Activated CD4-positive, alpha-beta T cell treated with anti-CD3 and anti-CD28 coated beads, Interleukin-2, amount 10 ng/mL, durations not matched to agents 24 days and 14 days (primary cell): ENCODE measurements at regions of chr15 and their contacts with region 1.

Region 1: DNA sequence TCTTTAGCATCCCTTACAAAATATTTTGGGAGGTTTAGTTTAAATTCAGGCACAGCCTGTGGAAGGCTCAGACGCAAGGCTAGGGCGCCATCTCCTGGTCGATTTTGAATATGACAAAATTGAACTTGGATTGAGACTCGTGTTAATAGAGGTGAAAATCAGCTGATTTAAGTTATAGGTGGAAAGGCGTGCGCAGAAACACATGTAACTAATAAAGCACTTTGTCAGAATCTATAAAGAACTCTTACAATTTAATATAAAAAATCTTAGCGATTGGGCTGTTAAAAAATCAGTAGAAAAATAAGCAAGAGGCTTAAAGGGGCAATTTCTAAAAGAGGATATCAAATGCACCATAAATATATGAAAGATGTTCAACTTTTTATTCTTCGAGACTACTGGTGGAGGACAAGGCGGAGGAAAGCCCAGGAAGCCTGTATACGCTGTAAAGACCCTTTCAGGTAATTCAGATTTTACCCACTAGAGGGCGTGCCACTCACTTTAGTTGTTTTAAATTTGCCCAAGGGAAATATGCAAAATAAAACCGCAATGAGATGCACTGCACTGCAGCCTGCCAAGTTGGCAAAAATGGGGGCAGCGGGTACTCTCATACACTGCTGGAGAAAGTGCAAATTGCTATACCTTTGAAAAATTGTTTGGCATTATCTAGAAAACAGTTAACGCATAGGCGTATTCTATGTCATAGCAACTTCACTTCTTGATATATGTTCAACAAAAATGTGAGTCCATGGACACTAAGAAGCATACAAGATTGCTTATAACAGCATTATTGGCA is 64.7 kb downstream of the SLC30A4 start:
- DNase-seq: peak; percentile 95
- H3K4me3 Mint-ChIP-seq: peak overlapping the region; percentile 86
- H3K27ac Mint-ChIP-seq: peak overlapping the region; percentile 92
- H3K4me1 Mint-ChIP-seq: peaks cover 44% of the 10 kb centered on the region
- H3K27me3 Mint-ChIP-seq: no peaks in the 10 kb centered on the region

Region 2: DNA sequence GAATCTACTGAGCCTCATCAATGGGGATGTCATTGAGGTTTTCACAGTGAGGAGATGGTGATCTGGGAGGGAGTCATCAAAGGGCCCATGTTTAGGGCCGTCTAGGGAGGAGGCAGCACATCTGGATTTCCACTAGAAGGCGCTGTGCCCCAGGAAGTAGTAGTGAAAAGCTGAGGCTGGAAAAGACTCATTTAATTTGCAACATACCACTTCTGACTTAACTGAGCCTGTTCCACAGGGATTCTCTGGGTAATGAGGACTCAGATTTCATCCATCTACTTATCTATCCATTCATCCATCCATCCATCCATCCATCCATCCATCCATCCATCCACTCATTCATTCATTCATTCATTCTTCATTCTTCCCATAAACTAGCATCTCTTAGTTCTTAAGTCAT is 252.6 kb before region 1 on chr15:
- intact Hi-C with region 1: loop called (anchors 2 kb)
- DNase-seq: peak; percentile 90
- H3K4me3 Mint-ChIP-seq: no peak overlapping the region
- H3K27ac Mint-ChIP-seq: peak overlapping the region; percentile 32
- H3K4me1 Mint-ChIP-seq: peaks cover 8% of the 10 kb centered on the region
- H3K27me3 Mint-ChIP-seq: peaks cover 6% of the 10 kb centered on the region

Region 3: GRCh38 chr15:45429974-45430792 is 27.7 kb before region 1 on chr15:
- intact Hi-C with region 1: loop called (anchors 1 kb)
- DNase-seq: peak; percentile 97
- H3K4me3 Mint-ChIP-seq: peak overlapping the region; percentile 70
- H3K27ac Mint-ChIP-seq: no peak overlapping the region
- H3K4me1 Mint-ChIP-seq: peaks cover 2% of the 10 kb centered on the region
- H3K27me3 Mint-ChIP-seq: peaks cover 23% of the 10 kb centered on the region

Region 4: DNA sequence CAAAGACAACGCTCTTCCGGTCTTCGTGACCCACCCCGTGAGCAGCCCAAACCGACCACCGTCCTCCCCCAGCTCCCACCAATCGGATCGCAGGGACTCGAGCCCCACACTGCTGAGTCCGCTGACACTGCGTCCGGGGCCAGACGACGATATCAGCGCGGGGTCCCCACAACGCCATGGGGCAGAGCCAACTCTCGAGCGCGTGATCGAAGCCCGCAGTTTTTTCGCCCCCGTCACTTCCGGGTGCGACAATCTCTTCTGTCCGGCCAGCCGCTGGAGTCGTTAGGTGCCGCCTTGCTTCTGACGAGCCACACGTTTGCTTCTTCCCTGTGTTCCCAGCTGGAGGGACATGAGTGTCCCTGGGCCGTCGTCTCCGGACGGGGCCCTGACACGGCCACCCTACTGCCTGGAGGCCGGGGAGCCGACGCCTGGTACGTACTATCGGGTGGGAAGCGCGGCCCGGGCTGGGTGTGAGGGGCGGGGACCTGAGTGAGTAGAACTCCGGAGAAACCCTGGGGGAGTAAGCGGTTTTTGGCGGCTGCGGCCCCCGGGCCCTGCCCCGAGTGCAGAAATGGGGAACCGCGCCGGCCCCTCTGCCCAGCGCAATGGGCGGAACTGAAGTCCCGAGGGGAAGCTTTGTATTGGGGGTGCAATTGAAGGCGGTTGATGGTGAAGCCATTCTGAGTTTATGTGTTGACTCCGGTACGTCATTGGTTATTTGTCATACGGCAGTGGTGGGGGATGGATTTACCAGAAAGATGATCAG is 129.4 kb after region 1 on chr15 and contains the start of gene BLOC1S6:
- intact Hi-C with region 1: loop called (anchors 1 kb)
- DNase-seq: peak; percentile 96
- H3K4me3 Mint-ChIP-seq: peak within 1 kb of the TSS; percentile 99
- H3K27ac Mint-ChIP-seq: peak within 1 kb of the TSS; percentile 100
- H3K4me1 Mint-ChIP-seq: peaks cover 31% of the 10 kb centered on the region
- H3K27me3 Mint-ChIP-seq: no peaks in the 10 kb centered on the region
- total RNA-seq, gene BLOC1S6: 42.8 and 44.8 TPM in 2 replicates

Region 5: DNA sequence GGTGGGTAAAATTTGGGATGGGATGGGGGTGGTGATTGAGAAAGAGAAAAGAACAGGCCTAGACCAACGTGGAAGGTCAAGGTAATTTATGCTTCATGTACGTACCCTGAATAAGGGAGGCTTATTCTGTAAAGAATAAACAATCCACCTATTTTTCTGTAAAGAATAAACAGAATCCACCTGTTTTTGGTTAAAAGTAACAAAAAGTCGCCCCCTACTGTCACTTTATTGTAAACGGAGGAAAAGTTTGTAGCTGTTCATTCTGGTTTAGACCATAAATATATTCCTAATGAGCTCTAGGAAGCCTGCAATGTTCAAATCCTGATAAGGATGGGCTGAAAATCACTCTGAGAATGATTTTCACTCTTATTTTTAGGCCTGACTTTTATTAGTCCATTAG is 153.5 kb after region 1 on chr15:
- intact Hi-C with region 1: loop called (anchors 1 kb)
- DNase-seq: peak; percentile 66
- H3K4me3 Mint-ChIP-seq: no peak overlapping the region
- H3K27ac Mint-ChIP-seq: peak overlapping the region; percentile 15
- H3K4me1 Mint-ChIP-seq: peaks cover 10% of the 10 kb centered on the region
- H3K27me3 Mint-ChIP-seq: no peaks in the 10 kb centered on the region